ENCODE measurements at regions of chr5 and their contacts with region 1.

Region 1: DNA sequence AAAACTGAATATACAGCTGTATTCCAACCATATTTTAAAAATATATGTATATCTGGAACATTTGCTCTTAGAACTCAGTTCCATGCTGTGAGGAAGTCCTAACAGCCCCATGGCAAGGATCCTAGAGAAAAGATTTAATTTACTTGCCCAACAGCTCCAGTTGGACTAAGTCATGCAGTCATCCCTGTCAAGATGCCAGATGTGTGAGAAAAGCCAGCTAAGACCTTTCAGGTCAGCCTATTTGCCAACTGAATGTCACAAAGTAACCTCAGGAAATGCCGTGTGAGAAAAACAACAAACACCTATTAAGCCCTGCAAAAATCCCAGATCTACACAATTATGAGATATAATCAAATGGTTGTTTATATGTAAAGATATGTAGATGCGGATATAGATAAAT is 416.3 kb downstream of the NR2F1-AS1 start:
- DNase-seq: peak; percentile 24
- H3K4me3 Mint-ChIP-seq: no peak overlapping the region
- H3K27ac Mint-ChIP-seq: no peak overlapping the region
- H3K4me1 Mint-ChIP-seq: peaks cover 24% of the 10 kb centered on the region
- H3K27me3 Mint-ChIP-seq: no peaks in the 10 kb centered on the region
- CTCF ChIP-seq: no peak

Region 2: GRCh38 chr5:93092349-93093105 is 72.2 kb before region 1 on chr5:
- CTCF ChIA-PET with region 1: no interaction called
- intact Hi-C with region 1: loop called (anchors 1 kb)
- DNase-seq: no peak
- H3K4me3 Mint-ChIP-seq: no peak overlapping the region
- H3K27ac Mint-ChIP-seq: no peak overlapping the region
- H3K4me1 Mint-ChIP-seq: peaks cover 12% of the 10 kb centered on the region
- H3K27me3 Mint-ChIP-seq: no peaks in the 10 kb centered on the region
- CTCF ChIP-seq: no peak

Region 3: GRCh38 chr5:93189707-93190120 is 25.0 kb after region 1 on chr5:
- CTCF ChIA-PET with region 1: no interaction called
- intact Hi-C with region 1: loop called (anchors 1 kb)
- DNase-seq: no peak
- H3K4me3 Mint-ChIP-seq: no peak overlapping the region
- H3K27ac Mint-ChIP-seq: peak overlapping the region; percentile 55
- H3K4me1 Mint-ChIP-seq: peaks cover 80% of the 10 kb centered on the region
- H3K27me3 Mint-ChIP-seq: no peaks in the 10 kb centered on the region
- CTCF ChIP-seq: no peak

Region 4: GRCh38 chr5:93359296-93359958 is 194.7 kb after region 1 on chr5:
- CTCF ChIA-PET with region 1: interaction called, 3 read pairs
- intact Hi-C with region 1: loop called (anchors 10 kb)
- DNase-seq: peak; percentile 48
- H3K4me3 Mint-ChIP-seq: peak overlapping the region; percentile 39
- H3K27ac Mint-ChIP-seq: peak overlapping the region; percentile 65
- H3K4me1 Mint-ChIP-seq: peaks cover 30% of the 10 kb centered on the region
- H3K27me3 Mint-ChIP-seq: no peaks in the 10 kb centered on the region
- CTCF ChIP-seq: no peak

Measured in Calu3 (cell line).